ENCODE measurements at regions of chr17 and their contacts with region 1.

Region 1: GRCh38 chr17:44919885-44920564 is 4.7 kb upstream of the GFAP start:
- DNase-seq: peak; percentile 76
- H3K4me3 ChIP-seq: no peak overlapping the region
- H3K27ac ChIP-seq: no peak overlapping the region
- H3K27me3 ChIP-seq: no peaks in the 10 kb centered on the region
- CTCF ChIP-seq: peak; percentile 95

Region 2: DNA sequence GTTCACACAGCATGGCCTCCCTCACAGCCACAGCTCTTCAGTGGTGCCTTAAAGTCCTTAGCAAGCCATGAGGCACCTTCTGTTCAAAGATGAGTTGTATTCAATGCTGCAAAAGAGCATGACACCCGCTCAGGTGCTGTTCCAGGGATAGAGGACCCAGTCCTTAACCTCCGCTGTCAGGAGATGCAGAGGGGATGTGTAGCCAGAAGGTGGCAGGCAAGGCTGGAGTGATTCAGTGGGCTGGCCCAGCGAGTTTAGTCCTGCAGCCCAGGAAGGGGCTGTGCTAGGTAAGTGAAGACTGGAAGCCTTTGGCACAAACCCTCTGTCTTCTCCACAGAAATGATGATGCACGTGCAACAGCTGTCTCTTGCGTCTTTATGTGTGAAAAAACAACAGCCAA is 186.3 kb before region 1 on chr17:
- in situ Hi-C with region 1: no loop called
- DNase-seq: peak; percentile 20
- H3K4me3 ChIP-seq: no peak overlapping the region
- H3K27ac ChIP-seq: no peak overlapping the region
- H3K27me3 ChIP-seq: no peaks in the 10 kb centered on the region
- CTCF ChIP-seq: peak; percentile 63

Region 3: DNA sequence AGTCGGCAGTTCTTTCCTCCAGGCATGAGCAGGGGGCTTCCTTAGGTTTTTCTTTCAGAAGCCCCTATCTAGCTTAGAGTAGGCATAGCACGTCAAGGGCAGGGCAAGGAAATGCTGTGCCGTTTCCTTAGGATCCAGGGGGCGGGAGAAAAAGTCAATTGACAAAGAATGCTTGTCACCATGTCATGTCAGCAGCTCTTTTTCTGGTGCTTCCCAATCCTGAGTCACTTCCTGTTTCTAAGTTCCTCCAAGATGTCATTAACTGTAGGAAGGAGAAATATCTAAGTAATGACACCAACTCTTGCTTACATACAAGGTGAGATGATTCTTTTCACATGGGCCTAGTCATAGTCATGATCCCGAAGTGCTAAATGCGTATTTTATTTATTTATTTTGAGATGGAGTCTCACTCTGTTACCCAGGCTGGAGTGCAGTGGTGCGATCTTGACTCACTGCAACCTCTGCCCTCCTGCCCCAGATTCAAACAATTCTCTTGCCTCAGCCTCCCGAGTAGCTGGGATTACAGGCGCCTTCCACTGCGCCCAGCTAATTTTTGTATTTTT is 125.1 kb before region 1 on chr17:
- in situ Hi-C with region 1: no loop called
- DNase-seq: peak; percentile 81
- H3K4me3 ChIP-seq: no peak overlapping the region
- H3K27ac ChIP-seq: peak overlapping the region; percentile 90
- H3K27me3 ChIP-seq: no peaks in the 10 kb centered on the region
- CTCF ChIP-seq: no peak

Region 4: DNA sequence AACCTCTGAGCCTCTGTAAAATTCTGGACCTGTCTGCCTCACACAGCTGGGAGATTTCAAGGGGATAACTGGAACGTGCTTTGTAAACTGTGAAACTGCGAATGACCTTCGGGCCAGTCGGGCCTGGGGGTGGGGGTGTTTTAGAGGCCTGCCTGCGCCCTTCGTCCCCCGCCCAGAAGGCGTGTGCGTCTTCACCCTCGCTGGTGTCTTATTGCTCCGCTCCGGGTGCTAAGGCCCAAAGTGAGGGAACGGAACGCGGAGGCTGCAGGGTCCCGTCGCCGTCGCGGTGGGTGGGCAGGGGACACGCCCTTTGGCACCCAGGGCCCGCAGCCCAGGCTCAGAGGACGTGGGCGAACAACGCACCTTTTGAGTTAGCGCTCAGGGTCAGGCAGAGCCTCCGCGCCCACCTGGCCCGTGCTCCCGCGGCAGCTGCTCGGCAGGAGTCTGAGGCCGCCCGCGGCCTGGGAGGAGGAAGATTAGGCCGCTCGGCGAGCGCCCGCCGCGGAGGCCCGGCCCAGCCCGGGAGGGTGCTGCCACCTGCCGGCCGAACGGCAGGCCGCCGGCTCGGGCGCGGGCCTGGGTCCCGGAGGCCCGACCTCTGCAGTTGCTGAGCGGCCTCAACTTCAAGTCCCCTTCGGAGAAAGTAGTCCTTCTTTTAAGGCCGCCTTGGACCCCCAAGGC is 101.7 kb after region 1 on chr17:
- in situ Hi-C with region 1: loop called (anchors 25 kb)
- DNase-seq: no peak
- H3K4me3 ChIP-seq: peak overlapping the region; percentile 53
- H3K27ac ChIP-seq: no peak overlapping the region
- H3K27me3 ChIP-seq: no peaks in the 10 kb centered on the region
- CTCF ChIP-seq: peak; percentile 53